GM23248 (cell line): ENCODE measurements at regions of chr1 and their contacts with region 1.

Region 1: DNA sequence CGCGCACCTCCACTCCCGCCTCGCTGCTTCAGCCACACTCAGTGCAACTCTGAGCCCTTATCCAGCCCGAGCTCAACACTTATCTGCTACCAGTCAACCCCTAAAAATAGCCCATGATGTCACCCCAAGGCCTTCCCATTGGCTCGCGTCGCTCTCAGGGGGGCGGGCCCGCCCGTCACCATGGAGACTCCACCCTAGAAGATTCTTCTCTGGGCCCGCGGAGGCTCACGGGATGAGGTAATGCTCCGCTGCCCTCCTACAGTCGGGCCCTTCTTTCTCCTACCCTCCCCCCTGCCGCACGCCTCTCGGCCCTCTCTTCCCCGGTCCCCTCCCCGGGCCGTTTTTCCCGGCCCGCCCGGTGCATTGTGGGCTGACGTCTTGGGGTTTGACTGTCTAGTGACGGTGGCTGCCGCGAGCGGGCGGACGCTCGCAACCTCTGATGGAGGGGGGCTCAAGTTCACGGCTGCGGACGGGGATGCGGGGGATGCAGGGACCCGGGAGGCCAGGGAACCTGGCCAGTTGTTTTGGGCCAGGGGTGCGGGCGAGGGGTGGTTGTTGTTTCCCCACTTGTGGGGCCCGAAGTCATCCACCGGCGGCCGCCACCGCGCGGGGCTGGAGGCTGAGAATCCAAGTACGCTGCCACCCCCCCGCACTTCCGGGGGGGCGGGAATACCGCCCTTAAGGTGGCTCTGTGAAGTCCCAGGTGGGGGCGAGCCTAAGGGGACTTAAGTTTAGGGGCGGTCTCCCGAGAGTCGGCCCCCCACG is at the start of gene JUN:
- DNase-seq: peak; percentile 100
- H3K4me3 ChIP-seq: peak within 1 kb of the TSS; percentile 92
- H3K27ac ChIP-seq: peak within 1 kb of the TSS; percentile 97
- H3K4me1 ChIP-seq: peaks cover 29% of the 10 kb centered on the region
- H3K27me3 ChIP-seq: no peaks in the 10 kb centered on the region
- total RNA-seq, gene JUN: 107 and 112 TPM in 2 replicates

Region 2: GRCh38 chr1:57943365-57943764 is 840.8 kb before region 1 on chr1:
- in situ Hi-C with region 1: no loop called
- DNase-seq: no peak
- H3K4me3 ChIP-seq: no peak overlapping the region
- H3K27ac ChIP-seq: no peak overlapping the region
- H3K4me1 ChIP-seq: no peaks in the 10 kb centered on the region
- H3K27me3 ChIP-seq: no peaks in the 10 kb centered on the region

Region 3: GRCh38 chr1:59296358-59297256 is 512.4 kb after region 1 on chr1 and contains the start of gene FGGY:
- in situ Hi-C with region 1: loop called (anchors 25 kb)
- DNase-seq: peak; percentile 99
- H3K4me3 ChIP-seq: peak within 1 kb of the TSS; percentile 74
- H3K27ac ChIP-seq: peak within 1 kb of the TSS; percentile 90
- H3K4me1 ChIP-seq: peaks cover 31% of the 10 kb centered on the region
- H3K27me3 ChIP-seq: no peaks in the 10 kb centered on the region
- total RNA-seq, gene FGGY: 11.4 and 16.9 TPM in 2 replicates